GM23248 (cell line): ENCODE measurements at regions of chr1 and their contacts with region 1.

Region 1: DNA sequence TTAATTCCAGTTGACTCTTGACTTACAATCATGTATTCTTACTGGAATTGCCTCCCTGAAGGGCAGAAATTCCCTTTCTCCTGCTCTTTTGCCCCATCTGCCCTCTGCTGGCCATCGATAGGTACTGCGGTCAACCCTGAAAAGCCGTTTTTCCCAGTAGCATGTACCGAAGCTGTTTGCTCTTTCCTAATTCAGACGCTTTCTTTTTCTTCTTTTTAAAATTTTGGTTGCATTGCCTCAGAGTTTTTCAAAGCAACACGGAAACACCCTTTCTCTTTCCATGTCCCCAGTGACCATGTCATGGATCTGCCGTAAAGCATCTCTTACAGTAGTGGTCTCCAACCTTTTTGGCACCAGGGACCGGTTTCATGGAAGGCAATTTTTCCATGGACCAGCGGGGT is 164.2 kb upstream of the C1orf21 start:
- DNase-seq: peak; percentile 71
- H3K4me3 ChIP-seq: peak overlapping the region; percentile 72
- H3K27ac ChIP-seq: no peak overlapping the region
- H3K4me1 ChIP-seq: no peaks in the 10 kb centered on the region; the same call in 1 of the 2 replicates
- H3K27me3 ChIP-seq: no peaks in the 10 kb centered on the region

Region 2: DNA sequence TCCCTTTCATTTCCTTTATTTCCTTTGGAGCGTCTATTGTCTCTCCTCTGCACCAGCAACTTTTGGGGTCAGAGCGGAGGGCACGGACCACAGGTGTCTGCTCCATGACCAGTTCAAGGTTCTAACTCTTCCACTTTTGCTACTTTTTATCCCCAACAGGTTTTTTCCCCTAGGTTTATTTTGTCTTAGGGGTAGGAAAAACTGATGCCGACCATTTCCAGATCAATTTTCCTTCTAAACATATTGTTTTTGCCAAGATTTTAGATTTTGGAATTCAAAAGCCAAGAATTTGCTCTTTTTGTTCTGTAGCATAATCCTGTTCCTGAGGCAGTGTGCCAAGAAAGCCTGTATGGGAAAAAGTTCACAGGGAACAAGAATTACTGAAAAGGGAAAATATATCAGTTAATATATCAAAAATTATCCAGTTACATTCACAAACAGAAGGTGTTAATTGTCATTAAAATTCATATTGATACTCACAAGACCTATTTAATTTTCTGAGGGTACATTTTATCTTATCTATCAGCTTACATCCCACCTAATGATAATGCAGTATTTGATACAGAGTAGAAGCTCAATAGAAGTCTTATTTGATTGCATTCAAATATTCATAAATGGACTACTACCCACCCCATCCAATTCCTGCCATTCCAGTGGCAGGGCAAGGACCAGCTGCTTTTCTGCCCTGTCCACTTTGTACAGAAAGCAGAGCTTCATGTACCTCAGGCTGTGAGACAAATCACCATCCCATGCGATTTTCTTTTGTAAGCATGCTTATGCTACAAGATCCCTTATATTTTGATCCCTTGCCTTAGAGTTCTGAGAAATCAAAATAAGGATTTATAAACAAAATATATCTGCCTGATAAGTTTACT is 139.9 kb before region 1 on chr1:
- in situ Hi-C with region 1: loop called (anchors 10 kb)
- DNase-seq: no peak
- H3K4me3 ChIP-seq: no peak overlapping the region
- H3K27ac ChIP-seq: no peak overlapping the region
- H3K4me1 ChIP-seq: no peaks in the 10 kb centered on the region
- H3K27me3 ChIP-seq: no peaks in the 10 kb centered on the region

Region 3: DNA sequence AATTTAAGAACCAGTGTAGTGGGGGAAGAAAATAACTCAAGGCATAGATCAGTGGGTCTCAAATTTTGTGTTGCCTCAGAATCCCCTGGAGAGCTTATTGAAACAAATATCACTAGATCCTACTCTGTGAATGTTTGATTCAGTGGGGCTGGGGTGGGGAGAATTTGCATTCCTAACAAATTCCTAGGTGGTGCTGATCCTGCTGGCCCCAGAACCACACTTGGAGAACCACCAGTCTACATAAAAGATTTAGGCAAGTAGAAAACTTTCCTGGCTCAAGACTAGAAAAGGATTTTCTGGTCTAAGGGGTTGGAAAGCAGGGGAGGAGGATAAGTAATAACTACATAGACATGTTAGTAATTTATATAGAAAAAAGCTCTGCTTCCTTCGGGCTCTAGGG is 130.1 kb after region 1 on chr1:
- in situ Hi-C with region 1: no loop called
- DNase-seq: no peak
- H3K4me3 ChIP-seq: no peak overlapping the region
- H3K27ac ChIP-seq: no peak overlapping the region
- H3K4me1 ChIP-seq: no peaks in the 10 kb centered on the region
- H3K27me3 ChIP-seq: no peaks in the 10 kb centered on the region; the same call in none of the 2 replicates

Region 4: GRCh38 chr1:184504040-184504954 is 281.6 kb after region 1 on chr1:
- in situ Hi-C with region 1: no loop called
- DNase-seq: no peak
- H3K4me3 ChIP-seq: no peak overlapping the region
- H3K27ac ChIP-seq: no peak overlapping the region
- H3K4me1 ChIP-seq: peaks cover 16% of the 10 kb centered on the region
- H3K27me3 ChIP-seq: no peaks in the 10 kb centered on the region